ENCODE measurements at regions of chr3 and their contacts with region 1.

Region 1: DNA sequence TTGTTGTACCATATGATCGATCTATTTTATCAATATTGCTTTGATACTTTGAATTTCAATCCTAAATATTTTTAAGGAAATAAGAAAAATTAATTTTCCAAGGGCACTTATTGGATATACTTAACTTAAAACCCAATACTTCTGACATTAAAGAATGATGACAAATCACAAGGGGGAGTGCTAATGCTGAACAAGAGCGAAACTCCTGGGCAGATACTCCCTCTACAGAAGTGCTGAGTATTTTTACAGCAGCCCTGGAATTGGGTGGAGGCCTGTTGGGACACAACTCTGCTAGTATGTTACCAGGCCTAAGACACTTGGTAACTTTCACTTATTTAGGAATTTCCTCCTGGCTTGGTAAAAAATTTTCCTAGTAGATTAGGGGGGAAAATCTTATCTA is 46.2 kb downstream of the DENND6A start:
- DNase-seq: peak in 5 of 9 donors; percentile 8 to 20 (median 12)
- ATAC-seq: no peak
- H3K4me3 ChIP-seq: no peak overlapping the region
- H3K4me3 Mint-ChIP-seq: no peak overlapping the region
- H3K27ac ChIP-seq: no peak overlapping the region
- H3K27ac Mint-ChIP-seq: peak overlapping the region in 8 of 9 donors; percentile 43 to 81 (median 66)
- H3K4me1 ChIP-seq: no peaks in the 10 kb centered on the region
- H3K4me1 Mint-ChIP-seq: peaks cover 6 to 27% (median 22%) of the 10 kb centered on the region in 7 donors
- H3K27me3 ChIP-seq: no peaks in the 10 kb centered on the region
- H3K27me3 Mint-ChIP-seq: no peaks in the 10 kb centered on the region

Region 2: DNA sequence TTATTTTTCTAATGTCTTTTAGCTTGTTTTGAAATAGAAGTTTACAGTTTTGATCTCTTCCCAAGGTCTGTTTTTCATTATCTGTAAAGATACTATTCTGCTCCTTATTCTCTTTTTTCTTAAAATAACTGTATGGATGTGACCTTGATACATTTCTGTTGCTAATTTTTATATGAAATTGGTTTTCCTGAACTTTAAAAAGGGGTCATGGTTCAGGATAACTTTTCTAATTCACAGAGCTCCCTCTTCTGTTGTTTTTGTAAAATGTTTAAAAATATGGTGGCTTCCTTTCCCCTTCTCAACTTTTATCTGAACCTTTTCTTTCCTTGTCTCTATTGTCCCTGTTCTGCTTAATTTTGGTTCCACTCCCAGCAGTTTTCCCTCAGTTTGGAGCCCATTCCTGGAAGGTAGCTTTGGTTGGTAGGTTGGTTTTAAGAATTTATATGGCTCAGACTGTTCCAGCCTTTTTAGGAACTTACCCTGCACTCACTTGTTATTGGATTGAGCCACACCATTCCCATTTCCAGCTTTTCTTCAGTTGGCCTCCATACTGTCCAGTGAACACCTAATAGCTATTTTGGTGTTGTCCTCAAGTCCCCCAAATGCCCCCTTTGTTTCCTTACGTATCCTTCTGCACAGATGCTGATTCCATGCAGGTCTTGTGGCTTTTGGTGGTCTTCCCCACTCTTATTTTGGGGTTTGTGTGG is 179.7 kb after region 1 on chr3:
- CTCF ChIA-PET with region 1: interaction called, 4 read pairs
- POLR2A ChIA-PET with region 1: no interaction called
- intact Hi-C with region 1: loop called in 1 of 2 experiments (anchors 1 kb)
- DNase-seq: peak in 1 of 9 donors; percentile 22
- ATAC-seq: no peak
- H3K4me3 ChIP-seq: no peak overlapping the region
- H3K4me3 Mint-ChIP-seq: peak overlapping the region in 1 of 10 donors; percentile 22
- H3K27ac ChIP-seq: no peak overlapping the region
- H3K27ac Mint-ChIP-seq: peak overlapping the region in 5 of 9 donors; percentile 14 to 62 (median 51)
- H3K4me1 ChIP-seq: peaks cover 0 to 4% of the 10 kb centered on the region in 2 donors
- H3K4me1 Mint-ChIP-seq: peaks cover 6 to 43% (median 37%) of the 10 kb centered on the region in 7 donors
- H3K27me3 ChIP-seq: no peaks in the 10 kb centered on the region
- H3K27me3 Mint-ChIP-seq: no peaks in the 10 kb centered on the region